ENCODE measurements at regions of chr1 and their contacts with region 1.

Region 1: GRCh38 chr1:115469703-115470476 is 131.8 kb upstream of the NGF start:
- DNase-seq: no peak

Region 2: GRCh38 chr1:114729782-114730181 is 740.1 kb before region 1 on chr1:
- intact Hi-C with region 1: no loop called
- DNase-seq: no peak

Region 3: GRCh38 chr1:115098979-115099692 is 370.8 kb before region 1 on chr1:
- intact Hi-C with region 1: loop called in 1 of 2 experiments (anchors 5 kb)
- DNase-seq: no peak

Region 4: DNA sequence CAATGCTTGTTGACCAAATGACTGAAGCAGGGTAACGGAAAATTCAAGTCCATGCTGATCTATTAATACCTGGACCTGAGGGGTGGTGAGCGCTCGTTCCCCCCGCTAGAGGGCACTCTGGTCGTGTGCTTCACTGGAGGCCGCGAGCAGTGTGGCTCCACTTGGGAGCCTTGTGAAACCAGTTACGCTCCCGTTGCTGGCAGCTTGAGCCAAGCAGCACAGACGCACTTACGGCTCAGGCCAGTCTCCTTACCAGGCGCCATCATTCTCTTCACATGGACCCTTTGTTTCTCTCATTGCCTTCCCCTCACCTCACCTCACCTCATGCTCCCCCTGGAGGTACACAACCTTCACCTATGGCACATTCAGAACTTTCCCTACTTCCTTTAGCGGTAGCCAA is 330.9 kb before region 1 on chr1:
- intact Hi-C with region 1: loop called (anchors 2 to 5 kb)
- DNase-seq: peak; percentile 96

Region 5: DNA sequence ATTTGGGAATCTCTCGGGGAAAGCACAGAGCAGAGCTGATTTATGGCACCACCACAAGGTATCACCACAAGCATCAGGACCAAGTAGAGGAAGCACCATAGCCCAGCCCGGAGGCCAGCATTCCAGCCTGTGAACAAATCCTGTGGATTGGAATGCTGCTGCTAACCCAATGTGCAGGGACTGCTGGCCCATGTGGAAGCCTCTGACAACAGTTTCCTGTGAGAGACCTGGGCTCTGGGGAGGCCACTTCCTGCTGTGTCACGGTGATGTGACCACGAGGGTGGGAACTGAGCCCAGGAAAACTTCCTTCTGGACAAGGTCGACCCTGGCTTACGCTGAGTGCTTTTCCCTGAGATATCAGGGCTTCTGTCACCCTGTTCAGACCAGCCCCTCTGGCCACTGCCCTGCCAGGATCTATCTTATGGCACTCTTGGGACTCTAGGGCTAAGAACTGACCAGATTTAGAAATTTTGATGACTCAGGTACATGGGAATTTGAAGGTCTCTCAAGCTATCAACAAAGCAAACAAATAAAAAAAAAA is 43.6 kb before region 1 on chr1:
- intact Hi-C with region 1: no loop called
- DNase-seq: peak; percentile 89

Measured in posterior vena cava (tissue), 2 donors.